ENCODE measurements at regions of chr6 and their contacts with region 1.

Region 1: DNA sequence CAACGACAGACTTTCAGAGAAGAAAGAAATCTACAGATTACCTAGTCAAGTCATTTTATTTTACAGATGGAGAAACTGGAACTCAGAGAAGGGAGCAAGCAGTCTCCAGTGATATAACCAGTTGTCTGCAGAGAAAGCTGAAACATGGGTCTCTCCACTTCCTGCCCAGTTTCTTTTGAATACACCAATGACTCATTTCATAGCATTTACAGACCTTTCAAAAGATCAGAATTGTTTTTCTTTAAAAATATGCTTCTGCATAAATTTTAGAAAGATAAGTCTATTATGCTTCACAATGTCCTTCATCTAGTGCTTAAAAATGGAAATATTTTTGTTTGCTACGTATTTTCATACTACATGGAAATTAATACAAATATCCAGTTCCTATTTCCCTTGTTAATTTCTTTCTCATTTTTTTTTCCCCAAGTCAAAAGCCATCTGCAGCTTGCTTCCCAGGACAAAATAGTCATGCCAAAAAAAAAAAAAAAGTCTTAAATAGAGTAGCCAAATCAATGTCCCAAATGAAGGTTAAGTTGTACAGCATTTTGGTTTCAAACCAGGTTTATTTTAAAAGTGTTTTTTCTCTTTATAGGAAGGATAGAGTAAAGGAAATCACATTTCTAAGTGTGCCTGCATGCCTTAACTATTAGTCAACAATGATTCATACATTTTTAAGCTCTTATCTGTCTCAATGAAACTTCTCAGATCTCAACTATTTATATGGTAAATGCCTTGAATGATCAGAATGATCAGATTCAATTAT is 36.9 kb downstream of the ARHGAP18 start:
- DNase-seq: peak; percentile 27
- H3K4me3 Mint-ChIP-seq: peak overlapping the region; percentile 63
- H3K27ac Mint-ChIP-seq: peak overlapping the region; percentile 71
- H3K4me1 Mint-ChIP-seq: peaks cover 32% of the 10 kb centered on the region
- H3K27me3 Mint-ChIP-seq: no peaks in the 10 kb centered on the region

Region 2: GRCh38 chr6:129490521-129491245 is 182.4 kb before region 1 on chr6:
- CTCF ChIA-PET with region 1: no interaction called
- intact Hi-C with region 1: loop called (anchors 1 kb)
- DNase-seq: peak; percentile 79
- H3K4me3 Mint-ChIP-seq: peak overlapping the region; percentile 67
- H3K27ac Mint-ChIP-seq: peak overlapping the region; percentile 100
- H3K4me1 Mint-ChIP-seq: peaks cover 70% of the 10 kb centered on the region
- H3K27me3 Mint-ChIP-seq: no peaks in the 10 kb centered on the region

Region 3: DNA sequence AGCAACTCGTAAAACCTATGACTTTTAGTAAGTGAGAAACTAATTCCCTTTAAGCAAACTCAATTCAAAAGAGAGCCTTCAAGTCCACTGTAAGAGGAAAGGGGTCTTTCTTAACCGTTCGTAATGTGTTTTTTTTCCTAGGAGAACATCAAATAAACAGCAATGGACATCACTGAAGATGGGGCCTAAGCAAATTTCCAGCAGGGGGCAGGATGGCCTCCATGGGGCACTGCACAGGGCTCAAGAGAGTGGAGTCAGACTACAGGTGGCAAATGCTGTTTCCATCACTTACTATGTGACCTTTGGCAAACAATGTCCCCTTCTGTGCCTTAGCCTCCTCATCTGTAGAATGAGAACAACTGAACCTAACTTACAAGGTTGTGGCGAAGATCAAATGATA is 51.8 kb before region 1 on chr6:
- CTCF ChIA-PET with region 1: no interaction called
- intact Hi-C with region 1: loop called (anchors 5 kb)
- DNase-seq: peak; percentile 54
- H3K4me3 Mint-ChIP-seq: no peak overlapping the region
- H3K27ac Mint-ChIP-seq: no peak overlapping the region
- H3K4me1 Mint-ChIP-seq: no peaks in the 10 kb centered on the region
- H3K27me3 Mint-ChIP-seq: no peaks in the 10 kb centered on the region

Region 4: GRCh38 chr6:129709769-129710449 is 36.8 kb after region 1 on chr6 and contains the start of gene ARHGAP18:
- CTCF ChIA-PET with region 1: interaction called, 4 read pairs
- intact Hi-C with region 1: loop called (anchors 1 kb)
- DNase-seq: peak; percentile 81
- H3K4me3 Mint-ChIP-seq: peak within 1 kb of the TSS; percentile 90
- H3K27ac Mint-ChIP-seq: peak within 1 kb of the TSS; percentile 51
- H3K4me1 Mint-ChIP-seq: peaks cover 16% of the 10 kb centered on the region
- H3K27me3 Mint-ChIP-seq: peaks cover 3% of the 10 kb centered on the region
- total RNA-seq, gene ARHGAP18: 3.2 to 3.7 TPM

Region 5: GRCh38 chr6:129766959-129767728 is 94.1 kb after region 1 on chr6:
- CTCF ChIA-PET with region 1: interaction called, 4 read pairs
- intact Hi-C with region 1: loop called (anchors 1 kb)
- DNase-seq: peak; percentile 83
- H3K4me3 Mint-ChIP-seq: peak overlapping the region; percentile 74
- H3K27ac Mint-ChIP-seq: peak overlapping the region; percentile 19
- H3K4me1 Mint-ChIP-seq: peaks cover 15% of the 10 kb centered on the region
- H3K27me3 Mint-ChIP-seq: peaks cover 13% of the 10 kb centered on the region

Region 6: GRCh38 chr6:130513770-130514169 is 840.7 kb after region 1 on chr6:
- CTCF ChIA-PET with region 1: no interaction called
- intact Hi-C with region 1: loop called (anchors 10 kb)
- DNase-seq: peak; percentile 77
- H3K4me3 Mint-ChIP-seq: no peak overlapping the region
- H3K27ac Mint-ChIP-seq: peak overlapping the region; percentile 78
- H3K4me1 Mint-ChIP-seq: peaks cover 66% of the 10 kb centered on the region
- H3K27me3 Mint-ChIP-seq: no peaks in the 10 kb centered on the region